ENCODE measurements at regions of chr5 and their contacts with region 1.

Region 1: DNA sequence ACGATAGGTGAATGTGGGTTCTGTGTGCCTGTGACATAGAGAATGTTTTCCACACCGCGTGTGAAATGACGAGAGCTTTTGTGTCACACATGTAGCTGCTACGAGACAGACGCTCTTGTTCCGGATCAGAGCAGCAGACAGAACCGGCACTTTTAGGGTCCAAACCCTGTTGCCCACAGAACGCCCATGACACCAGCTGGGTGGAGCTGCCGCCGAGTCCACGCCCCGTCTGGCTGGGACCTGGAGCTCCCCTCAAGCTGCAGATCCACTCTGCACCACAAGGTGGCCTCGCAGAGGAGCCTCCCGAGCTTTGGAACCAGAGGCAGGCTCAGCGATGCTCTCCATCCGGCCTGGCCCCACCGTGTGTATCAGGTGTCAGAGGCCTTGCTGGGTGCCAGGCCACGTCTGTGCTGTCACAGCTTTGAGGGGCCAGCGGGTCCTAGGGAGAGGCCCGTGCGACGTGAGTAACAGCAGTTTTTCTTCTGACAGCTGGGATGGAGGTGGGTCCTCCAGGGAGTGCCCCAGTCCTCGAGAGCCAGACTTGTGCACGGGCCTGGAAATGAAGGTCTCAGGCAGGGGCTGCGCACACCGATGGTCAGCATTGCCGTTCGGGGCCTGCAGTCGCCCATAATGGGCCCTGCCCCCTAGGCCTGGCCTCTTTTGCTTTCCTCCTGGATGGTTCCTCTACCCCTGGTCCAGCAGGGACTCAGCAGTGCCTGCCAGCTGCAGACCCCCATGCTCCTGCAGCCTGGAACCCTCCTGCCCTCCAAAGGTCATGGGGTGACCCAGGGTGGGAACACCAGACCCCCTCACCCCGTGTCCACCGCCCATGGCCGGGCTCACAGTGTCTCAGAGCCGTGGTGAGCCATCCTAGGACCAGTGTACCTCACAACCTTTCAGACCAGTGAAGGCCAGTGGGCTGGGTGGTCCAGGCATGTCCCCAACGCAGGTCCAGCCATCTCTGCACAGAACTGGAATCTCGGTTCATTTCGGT is 2.5 kb upstream of the LRRC14B start:
- DNase-seq: peak; percentile 5
- H3K4me3 ChIP-seq: peak overlapping the region; percentile 23; the same call in 1 of the 2 replicates
- CTCF ChIP-seq: peak; percentile 98

Region 2: DNA sequence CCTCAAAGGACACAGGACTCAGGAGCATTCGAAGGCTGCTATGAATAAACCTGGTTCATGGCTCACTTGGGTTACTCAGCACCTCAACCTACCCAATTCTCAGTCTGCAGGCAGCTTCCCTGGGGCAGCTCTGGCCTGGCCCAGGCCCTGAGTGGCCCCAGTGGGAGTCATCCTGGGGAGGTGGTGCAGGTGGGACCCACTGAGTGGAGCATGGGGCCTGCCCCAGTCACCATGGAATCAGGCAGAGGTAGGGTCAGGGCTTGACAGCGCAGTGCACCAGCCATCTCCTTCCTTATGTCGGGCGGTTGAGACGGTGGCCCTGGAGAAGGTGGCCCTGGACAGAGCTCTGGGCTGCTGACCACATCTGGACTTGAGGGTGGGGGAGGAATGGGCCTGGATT is 77.6 kb before region 1 on chr5:
- CTCF ChIA-PET with region 1: no interaction called
- POLR2A ChIA-PET with region 1: no interaction called
- DNase-seq: no peak
- H3K4me3 ChIP-seq: no peak overlapping the region
- CTCF ChIP-seq: no peak

Region 3: DNA sequence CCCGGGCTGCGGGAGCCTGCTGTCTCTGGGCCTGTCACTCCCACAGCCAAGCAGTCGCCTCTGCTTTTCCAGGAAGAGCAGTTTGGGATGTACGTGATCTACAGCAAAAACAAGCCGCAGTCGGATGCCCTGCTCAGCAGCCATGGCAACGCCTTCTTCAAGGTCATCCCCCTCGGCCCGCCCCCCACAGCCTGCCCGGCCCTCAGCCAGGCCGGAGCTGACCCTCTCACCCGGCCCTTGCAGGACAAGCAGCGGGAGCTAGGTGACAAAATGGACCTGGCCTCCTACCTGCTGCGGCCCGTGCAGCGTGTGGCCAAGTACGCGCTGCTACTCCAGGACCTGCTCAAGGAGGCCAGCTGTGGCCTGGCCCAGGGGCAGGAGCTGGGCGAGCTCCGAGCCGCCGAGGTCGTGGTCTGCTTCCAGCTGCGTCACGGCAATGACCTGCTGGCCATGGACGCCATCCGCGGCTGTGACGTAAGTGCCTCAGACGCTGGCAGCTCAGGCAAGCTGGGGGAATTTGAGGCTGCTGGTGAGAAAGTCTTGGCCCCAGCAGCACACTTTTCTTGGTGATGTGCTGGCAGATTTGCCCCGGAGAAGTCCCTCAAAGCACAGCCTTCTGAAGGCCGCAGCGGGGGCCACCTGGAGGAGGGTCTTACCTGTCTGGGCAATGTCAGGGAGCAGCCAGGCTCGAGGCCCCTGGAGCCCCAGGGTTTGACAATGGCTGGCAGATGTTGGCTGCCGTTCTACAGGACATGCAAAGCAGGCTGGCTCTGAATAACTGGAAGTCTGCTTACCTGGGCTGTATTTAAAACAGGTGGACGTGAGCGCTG is 17.6 kb before region 1 on chr5:
- CTCF ChIA-PET with region 1: interaction called, 16 read pairs
- POLR2A ChIA-PET with region 1: no interaction called
- DNase-seq: no peak
- H3K4me3 ChIP-seq: no peak overlapping the region
- CTCF ChIP-seq: no peak

Region 4: GRCh38 chr5:207599-207998 is 18.8 kb after region 1 on chr5:
- CTCF ChIA-PET with region 1: interaction called, 11 read pairs
- POLR2A ChIA-PET with region 1: no interaction called
- DNase-seq: no peak
- H3K4me3 ChIP-seq: no peak overlapping the region
- CTCF ChIP-seq: no peak

Region 5: DNA sequence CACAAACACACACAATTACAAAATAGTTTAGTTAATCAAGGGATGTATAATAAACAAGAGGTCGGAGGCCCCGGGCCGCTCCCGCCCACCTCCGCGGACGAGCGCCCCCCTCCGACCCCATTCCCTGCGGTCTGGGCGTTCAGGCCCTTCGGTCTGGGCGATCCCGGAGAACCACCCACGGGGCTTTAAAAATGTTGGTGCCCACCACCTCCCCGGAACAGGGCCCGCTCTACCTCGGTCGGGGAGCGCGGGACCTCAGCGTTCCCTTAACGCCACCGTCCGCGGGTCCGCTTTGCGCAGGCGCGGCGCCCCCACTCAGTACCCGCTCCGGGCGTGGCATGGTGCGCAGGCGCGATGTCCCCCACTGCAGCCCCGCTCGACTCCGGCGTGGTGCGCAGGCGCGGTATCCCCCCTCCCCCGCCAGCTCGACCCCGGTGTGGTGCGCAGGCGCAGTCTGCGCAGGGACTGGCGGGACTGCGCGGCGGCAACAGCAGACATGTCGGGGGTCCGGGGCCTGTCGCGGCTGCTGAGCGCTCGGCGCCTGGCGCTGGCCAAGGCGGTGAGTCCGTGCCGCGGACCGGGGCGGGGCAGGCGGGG is 29.2 kb after region 1 on chr5 and contains the starts of genes CCDC127 and SDHA:
- CTCF ChIA-PET with region 1: interaction called, 13 read pairs
- POLR2A ChIA-PET with region 1: interaction called, 3 read pairs
- DNase-seq: peak; percentile 14
- H3K4me3 ChIP-seq: peak within 1 kb of the TSS; percentile 83
- CTCF ChIP-seq: peak; percentile 51

Measured in AG04449 (cell line).